HEK293 (cell line): ENCODE measurements at regions of chr18 and their contacts with region 1.

Region 1: DNA sequence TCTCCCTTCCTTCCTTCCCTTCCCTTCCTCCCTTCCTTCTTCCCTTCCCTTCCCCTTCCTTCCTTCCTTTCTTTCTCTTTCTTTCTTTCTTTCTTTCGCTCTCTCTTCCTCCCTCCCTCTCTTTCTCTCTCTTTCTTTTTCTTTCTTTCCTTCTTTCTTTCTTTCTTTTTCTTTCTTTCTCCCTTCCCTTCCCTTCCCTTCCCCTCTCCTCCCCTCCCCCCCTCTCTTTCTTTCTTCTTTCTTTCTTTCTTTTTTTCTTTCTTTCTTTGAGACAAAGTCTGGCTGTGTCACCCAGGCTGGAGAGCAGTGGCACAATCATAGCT is 34.8 kb downstream of the GATA6 start:
- H3K4me3 ChIP-seq: no peak overlapping the region
- H3K27ac ChIP-seq: no peak overlapping the region
- H3K4me1 ChIP-seq: no peaks in the 10 kb centered on the region
- CTCF ChIP-seq: no peak

Region 2: GRCh38 chr18:22223254-22223960 is 19.2 kb after region 1 on chr18:
- CTCF ChIA-PET with region 1: no interaction called
- POLR2A ChIA-PET with region 1: interaction called, 15 read pairs
- H3K4me3 ChIP-seq: no peak overlapping the region
- H3K27ac ChIP-seq: 0 out of 2 replicates have a peak overlapping the region, but pooled peaks have one; percentile 49
- H3K4me1 ChIP-seq: peaks cover 10% of the 10 kb centered on the region
- CTCF ChIP-seq: no peak